Common myeloid progenitor, CD34-positive (primary cell): ENCODE measurements at regions of chr9 and their contacts with region 1.

Region 1: DNA sequence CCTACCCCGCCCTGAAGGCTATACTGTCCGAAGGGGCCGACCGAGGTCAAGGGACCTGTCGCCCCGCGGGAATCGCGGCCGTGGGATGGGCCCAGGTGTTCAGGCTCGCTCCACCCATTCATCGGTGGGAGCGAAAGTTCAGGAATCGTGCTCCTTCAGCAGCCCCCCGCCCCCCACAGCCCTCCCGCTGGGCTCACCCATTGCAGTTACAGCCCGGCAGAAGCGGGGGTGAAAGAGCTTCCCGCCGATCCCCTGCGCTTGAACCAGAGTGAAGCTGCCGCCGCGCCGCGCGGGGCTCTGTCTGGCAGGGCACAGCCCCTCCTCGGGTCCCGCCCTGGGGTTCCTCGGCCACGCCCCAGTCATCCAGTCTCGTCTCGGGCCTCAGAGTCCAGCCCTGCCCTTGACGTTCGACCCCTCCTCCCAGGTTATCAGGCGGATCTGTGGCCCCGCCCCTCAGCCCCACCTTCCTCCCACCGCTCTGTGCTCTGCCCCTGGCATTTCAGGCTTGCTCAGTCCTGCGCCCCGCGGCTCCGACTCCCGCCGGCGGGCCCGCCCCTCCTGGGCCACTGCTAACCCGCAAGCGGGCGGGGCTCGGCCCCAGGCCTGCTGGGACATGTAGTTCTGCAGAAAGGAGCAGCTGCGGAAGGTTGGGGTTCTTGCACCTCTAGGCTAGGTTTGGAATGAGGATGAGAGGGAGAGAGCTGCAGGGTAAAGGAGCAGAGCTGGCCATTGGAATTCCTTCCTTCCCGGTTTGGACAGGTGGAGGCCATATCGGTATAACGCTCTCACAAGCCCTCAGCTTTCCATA is at the start of gene MYORG:
- DNase-seq: peak; percentile 97 to 99 (median 98)
- H3K4me3 ChIP-seq: peak within 1 kb of the TSS; percentile 43 to 96 (median 78)
- H3K27ac ChIP-seq: no peak within 1 kb of the TSS
- H3K4me1 ChIP-seq: peaks cover 0 to 43% (median 34%) of the 10 kb centered on the region in 4 experiments
- H3K27me3 ChIP-seq: peaks cover 0 to 10% (median 5%) of the 10 kb centered on the region in 5 experiments

Region 2: GRCh38 chr9:34206561-34206960 is 170.2 kb before region 1 on chr9:
- CTCF ChIA-PET with region 1: no interaction called
- POLR2A ChIA-PET with region 1: no interaction called
- DNase-seq: no peak
- H3K4me3 ChIP-seq: no peak overlapping the region
- H3K27ac ChIP-seq: no peak overlapping the region
- H3K4me1 ChIP-seq: no peaks in the 10 kb centered on the region
- H3K27me3 ChIP-seq: no peaks in the 10 kb centered on the region

Region 3: DNA sequence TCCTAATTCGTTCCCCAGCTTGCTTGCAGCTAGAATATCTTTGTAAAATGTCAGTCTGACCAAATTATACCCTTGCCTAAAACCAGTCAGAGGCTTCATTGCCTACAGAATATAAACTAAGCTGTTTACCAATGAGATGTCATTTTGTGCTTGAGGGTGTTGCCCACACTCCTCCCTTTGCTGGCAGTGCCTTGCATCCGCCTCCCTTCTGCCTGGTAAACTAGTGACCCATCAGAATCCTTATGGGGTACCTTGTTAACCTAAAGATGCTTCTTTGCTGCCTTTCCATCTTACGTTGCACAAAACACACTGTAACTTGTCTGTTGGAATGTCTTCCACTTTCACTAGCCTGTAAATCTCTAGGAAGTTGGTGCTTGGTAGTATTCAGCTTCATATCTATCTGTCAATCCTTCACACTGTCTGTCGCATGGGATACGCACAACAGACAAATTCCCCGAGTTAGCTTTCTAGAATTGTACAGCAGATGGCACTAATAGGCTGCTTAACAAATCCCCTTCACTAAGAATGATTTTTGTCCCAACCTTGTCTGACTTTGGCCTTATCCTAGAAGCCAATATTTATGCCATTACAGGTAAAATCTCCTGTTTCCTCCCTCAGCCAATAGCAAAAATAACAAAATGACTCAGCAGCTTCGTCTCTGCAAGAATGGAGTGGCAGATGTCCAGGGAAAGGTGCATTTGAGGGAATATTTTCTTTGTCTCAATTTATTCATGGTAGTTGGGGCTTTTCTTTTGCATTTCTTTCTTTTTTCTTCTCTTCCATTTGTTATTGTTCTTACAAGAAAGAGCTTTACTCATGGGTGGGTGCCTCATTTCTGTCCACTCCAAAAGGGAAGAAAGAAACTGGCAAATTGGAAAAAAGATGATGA is 44.5 kb before region 1 on chr9:
- CTCF ChIA-PET with region 1: interaction called, 216 read pairs
- POLR2A ChIA-PET with region 1: interaction called, 3 read pairs
- DNase-seq: peak; percentile 60 to 74 (median 66)
- H3K4me3 ChIP-seq: no peak overlapping the region
- H3K27ac ChIP-seq: no peak overlapping the region
- H3K4me1 ChIP-seq: peaks cover 5 to 29% (median 18%) of the 10 kb centered on the region in 4 experiments
- H3K27me3 ChIP-seq: no peaks in the 10 kb centered on the region

Region 4: GRCh38 chr9:34337404-34337803 is 39.4 kb before region 1 on chr9:
- CTCF ChIA-PET with region 1: interaction called, 216 read pairs
- POLR2A ChIA-PET with region 1: interaction called, 4 read pairs
- DNase-seq: peak in 2 of 3 donors; percentile 20 to 33
- H3K4me3 ChIP-seq: no peak overlapping the region
- H3K27ac ChIP-seq: no peak overlapping the region
- H3K4me1 ChIP-seq: no peaks in the 10 kb centered on the region
- H3K27me3 ChIP-seq: no peaks in the 10 kb centered on the region

Region 5: DNA sequence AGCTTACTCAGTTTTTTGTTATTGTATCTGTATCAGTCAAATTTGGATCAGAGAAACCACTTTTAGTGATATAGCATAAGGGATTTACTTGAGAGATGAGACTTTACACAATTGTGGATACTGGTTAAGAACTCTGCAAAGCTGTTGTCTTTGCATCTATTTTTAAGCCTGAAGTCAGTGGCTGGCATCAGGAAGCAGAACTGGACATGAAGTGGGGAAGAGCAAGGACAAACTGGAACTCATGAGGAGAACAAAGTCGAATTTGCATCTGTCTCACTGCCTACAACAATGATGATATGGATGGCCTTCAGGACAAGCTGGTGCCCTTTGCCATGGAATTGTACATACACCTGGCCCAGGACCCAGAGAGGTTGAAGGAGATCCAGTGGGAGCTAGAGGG is 15.7 kb after region 1 on chr9:
- CTCF ChIA-PET with region 1: interaction called, 22 read pairs
- POLR2A ChIA-PET with region 1: no interaction called
- DNase-seq: no peak
- H3K4me3 ChIP-seq: no peak overlapping the region
- H3K27ac ChIP-seq: no peak overlapping the region
- H3K4me1 ChIP-seq: peaks cover 0 to 5% (median 2%) of the 10 kb centered on the region in 4 experiments
- H3K27me3 ChIP-seq: peaks cover 0 to 2% (median 0%) of the 10 kb centered on the region in 5 experiments